Activated naive CD4-positive, alpha-beta T cell treated with anti-CD3 and anti-CD28 coated beads for 36 hours (primary cell): ENCODE measurements at regions of chr3 and their contacts with region 1.

Region 1: GRCh38 chr3:169863458-169863899 is 6.3 kb downstream of the LRRC31 start:
- DNase-seq: peak; percentile 86
- H3K4me3 Mint-ChIP-seq: no peak overlapping the region
- H3K27ac Mint-ChIP-seq: no peak overlapping the region
- H3K4me1 Mint-ChIP-seq: peaks cover 25% of the 10 kb centered on the region
- H3K27me3 Mint-ChIP-seq: no peaks in the 10 kb centered on the region

Region 2: GRCh38 chr3:169772897-169773828 is 90.3 kb before region 1 on chr3 and contains the start of gene MYNN:
- CTCF ChIA-PET with region 1: interaction called, 3 read pairs
- intact Hi-C with region 1: loop called (anchors 1 kb)
- DNase-seq: peak; percentile 94
- H3K4me3 Mint-ChIP-seq: peak within 1 kb of the TSS; percentile 94
- H3K27ac Mint-ChIP-seq: peak within 1 kb of the TSS; percentile 97
- H3K4me1 Mint-ChIP-seq: peaks cover 36% of the 10 kb centered on the region
- H3K27me3 Mint-ChIP-seq: no peaks in the 10 kb centered on the region
- total RNA-seq, gene MYNN: 12.0 to 13.5 TPM

Region 3: DNA sequence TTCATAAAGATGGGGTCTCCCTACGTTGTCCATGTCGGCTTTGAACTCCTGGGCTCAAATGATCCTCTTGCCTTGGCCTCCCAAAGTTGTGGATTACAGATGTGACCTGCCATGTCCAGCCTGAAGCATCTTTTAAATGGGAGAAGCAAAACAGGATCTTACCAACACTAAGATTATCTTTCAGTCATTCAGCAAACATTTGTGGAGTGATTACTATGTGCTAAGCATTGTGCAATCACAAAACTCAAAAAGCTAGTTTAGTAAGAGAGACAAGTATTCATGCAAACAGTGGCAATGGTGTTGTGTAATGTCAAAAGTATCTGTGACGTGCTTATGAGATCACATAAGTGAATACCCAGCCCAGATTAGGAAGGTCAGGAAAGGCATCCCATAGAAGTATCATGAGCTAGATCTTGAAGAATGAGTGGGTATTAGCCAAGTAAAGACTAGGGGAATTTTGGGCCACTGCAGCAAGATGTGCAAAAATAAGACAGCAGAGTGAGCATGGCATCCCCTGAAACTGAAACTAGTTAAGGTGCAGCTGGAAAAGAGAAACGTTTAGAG is 135.2 kb after region 1 on chr3:
- CTCF ChIA-PET with region 1: interaction called, 3 read pairs
- intact Hi-C with region 1: loop called (anchors 1 kb)
- DNase-seq: no peak
- H3K4me3 Mint-ChIP-seq: no peak overlapping the region
- H3K27ac Mint-ChIP-seq: peak overlapping the region; percentile 83
- H3K4me1 Mint-ChIP-seq: peaks cover 40% of the 10 kb centered on the region
- H3K27me3 Mint-ChIP-seq: no peaks in the 10 kb centered on the region

Region 4: GRCh38 chr3:170037463-170038433 is 174.3 kb after region 1 on chr3 and contains the start of gene GPR160:
- CTCF ChIA-PET with region 1: interaction called, 4 read pairs
- intact Hi-C with region 1: loop called (anchors 1 kb)
- DNase-seq: peak; percentile 89
- H3K4me3 Mint-ChIP-seq: peak within 1 kb of the TSS; percentile 84
- H3K27ac Mint-ChIP-seq: no peak within 1 kb of the TSS
- H3K4me1 Mint-ChIP-seq: peaks cover 24% of the 10 kb centered on the region
- H3K27me3 Mint-ChIP-seq: no peaks in the 10 kb centered on the region
- total RNA-seq, gene GPR160: 10.3 TPM

Region 5: GRCh38 chr3:170144437-170144843 is 281.0 kb after region 1 on chr3:
- CTCF ChIA-PET with region 1: no interaction called
- intact Hi-C with region 1: no loop called
- DNase-seq: no peak
- H3K4me3 Mint-ChIP-seq: no peak overlapping the region
- H3K27ac Mint-ChIP-seq: peak overlapping the region; percentile 71
- H3K4me1 Mint-ChIP-seq: peaks cover 34% of the 10 kb centered on the region
- H3K27me3 Mint-ChIP-seq: no peaks in the 10 kb centered on the region

Region 6: DNA sequence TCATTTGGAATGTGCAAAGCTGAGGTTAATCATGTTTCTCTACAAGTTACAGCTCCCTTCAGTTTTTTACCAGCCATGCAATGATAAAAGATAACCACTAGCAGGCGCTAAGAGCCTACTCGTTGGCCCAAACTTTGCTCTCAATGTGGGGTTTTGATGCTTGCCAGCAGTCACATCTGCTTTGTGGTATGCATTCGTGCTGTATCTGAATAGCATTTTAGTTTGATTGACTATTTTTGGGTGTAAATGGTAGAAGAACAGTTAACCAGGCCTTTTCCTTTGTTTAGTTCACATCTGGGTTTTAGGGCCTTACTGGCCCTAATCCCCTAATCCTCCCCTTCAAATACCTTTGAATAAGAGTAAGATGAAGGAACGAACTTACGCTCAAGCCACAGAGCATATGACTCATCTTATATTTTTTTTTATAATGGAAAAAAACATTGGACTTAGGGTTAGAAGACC is 550.8 kb after region 1 on chr3:
- CTCF ChIA-PET with region 1: interaction called, 3 read pairs
- intact Hi-C with region 1: loop called (anchors 1 kb)
- DNase-seq: peak; percentile 59
- H3K4me3 Mint-ChIP-seq: no peak overlapping the region
- H3K27ac Mint-ChIP-seq: no peak overlapping the region
- H3K4me1 Mint-ChIP-seq: peaks cover 6% of the 10 kb centered on the region
- H3K27me3 Mint-ChIP-seq: peaks cover 16% of the 10 kb centered on the region

Region 7: DNA sequence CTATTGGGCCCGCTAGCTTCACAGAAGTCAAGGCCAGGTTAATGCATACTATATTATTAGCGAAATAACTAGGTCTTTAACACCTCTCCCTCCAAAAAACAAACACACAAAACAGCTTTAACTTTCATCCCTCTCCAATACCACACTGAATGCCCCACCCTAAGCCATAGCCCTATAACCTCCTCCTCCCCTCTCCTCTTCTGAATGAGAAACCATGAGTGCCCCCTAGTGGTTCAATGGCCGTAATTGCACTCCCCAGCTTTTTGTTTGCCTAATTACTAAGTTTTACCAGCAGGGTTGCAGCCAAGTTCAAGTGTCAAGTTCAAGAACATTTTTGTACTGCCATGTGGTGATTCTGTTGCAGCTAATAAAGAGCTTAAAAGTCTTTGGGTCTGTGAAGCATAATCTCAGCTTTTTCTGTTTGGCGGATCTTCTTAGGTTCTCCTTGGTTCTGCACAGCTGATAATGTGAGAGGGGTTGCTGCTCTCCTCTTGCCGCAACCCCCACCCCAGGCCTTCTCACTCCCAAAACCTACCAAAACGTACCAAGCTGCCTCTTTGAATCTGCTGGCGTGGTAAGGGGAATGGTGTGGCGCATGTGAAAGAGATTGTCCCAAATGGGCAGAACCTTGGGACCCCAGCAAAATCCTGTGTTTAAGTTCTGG is 948.6 kb after region 1 on chr3:
- CTCF ChIA-PET with region 1: no interaction called
- intact Hi-C with region 1: loop called (anchors 1 kb)
- DNase-seq: peak; percentile 81
- H3K4me3 Mint-ChIP-seq: no peak overlapping the region
- H3K27ac Mint-ChIP-seq: no peak overlapping the region
- H3K4me1 Mint-ChIP-seq: no peaks in the 10 kb centered on the region
- H3K27me3 Mint-ChIP-seq: no peaks in the 10 kb centered on the region